Lower leg skin (tissue), 4 donors: ENCODE measurements at regions of chr5 and their contacts with region 1.

Region 1: GRCh38 chr5:78274540-78275197 is 19.8 kb downstream of the AP3B1 start:
- DNase-seq: no peak
- H3K4me3 ChIP-seq: no peak overlapping the region
- CTCF ChIP-seq: no peak
- POLR2A ChIP-seq: no peak

Region 2: DNA sequence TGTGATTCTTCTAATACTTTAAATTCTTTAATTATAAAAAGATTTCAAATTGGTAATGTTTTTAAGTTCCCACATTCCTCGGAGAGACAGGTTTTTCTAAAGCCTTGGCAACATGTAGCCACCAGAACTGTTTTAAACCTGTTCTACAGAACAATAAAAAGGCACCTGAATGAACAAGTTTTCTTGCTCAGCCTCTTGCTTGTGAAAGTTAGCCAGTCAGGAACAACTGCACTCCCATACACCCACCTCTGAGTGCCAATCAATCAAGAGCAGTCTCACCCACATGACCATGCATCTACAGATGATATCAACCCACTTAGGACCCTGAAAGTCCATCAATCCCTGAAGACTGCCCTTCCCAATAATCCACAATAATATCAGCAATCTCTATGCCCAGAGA is 42.5 kb before region 1 on chr5:
- intact Hi-C with region 1: loop called (anchors 1 kb)
- DNase-seq: no peak
- H3K4me3 ChIP-seq: no peak overlapping the region
- CTCF ChIP-seq: no peak
- POLR2A ChIP-seq: no peak